ENCODE measurements at regions of chr2 and their contacts with region 1.

Region 1: GRCh38 chr2:209208211-209208610 is 215.6 kb upstream of the MAP2 start:
- DNase-seq: peak; percentile 32
- ATAC-seq: peak; percentile 82
- H3K4me3 ChIP-seq: peak overlapping the region; percentile 25 to 54 (median 53); a peak in 5 of 6 replicates
- H3K27ac ChIP-seq: no peak overlapping the region
- H3K4me1 ChIP-seq: no peaks in the 10 kb centered on the region
- H3K27me3 ChIP-seq: no peaks in the 10 kb centered on the region
- CTCF ChIP-seq: peak; percentile 78
- EP300 ChIP-seq: no peak
- POLR2A ChIP-seq: no peak
- RAD21 ChIP-seq: peak; percentile 72

Region 2: GRCh38 chr2:208466151-208466919 is 741.9 kb before region 1 on chr2:
- CTCF ChIA-PET with region 1: interaction called, 19 read pairs
- POLR2A ChIA-PET with region 1: no interaction called
- in situ Hi-C with region 1: loop called (anchors 10 kb)
- intact Hi-C with region 1: loop called (anchors 1 kb)
- DNase-seq: peak; percentile 61
- ATAC-seq: peak; percentile 95
- H3K4me3 ChIP-seq: no peak overlapping the region
- H3K27ac ChIP-seq: no peak overlapping the region
- H3K4me1 ChIP-seq: no peaks in the 10 kb centered on the region
- H3K27me3 ChIP-seq: no peaks in the 10 kb centered on the region
- CTCF ChIP-seq: peak; percentile 86
- EP300 ChIP-seq: no peak
- POLR2A ChIP-seq: no peak
- RAD21 ChIP-seq: peak; percentile 76

Region 3: GRCh38 chr2:208657468-208657867 is 550.7 kb before region 1 on chr2:
- CTCF ChIA-PET with region 1: no interaction called
- POLR2A ChIA-PET with region 1: no interaction called
- in situ Hi-C with region 1: no loop called
- intact Hi-C with region 1: loop called (anchors 1 kb)
- DNase-seq: no peak
- ATAC-seq: peak; percentile 87
- H3K4me3 ChIP-seq: no peak overlapping the region
- H3K27ac ChIP-seq: no peak overlapping the region
- H3K4me1 ChIP-seq: no peaks in the 10 kb centered on the region
- H3K27me3 ChIP-seq: no peaks in the 10 kb centered on the region
- CTCF ChIP-seq: peak; percentile 21; the same call in 1 of the 2 replicates
- EP300 ChIP-seq: no peak
- POLR2A ChIP-seq: no peak
- RAD21 ChIP-seq: no peak

Region 4: DNA sequence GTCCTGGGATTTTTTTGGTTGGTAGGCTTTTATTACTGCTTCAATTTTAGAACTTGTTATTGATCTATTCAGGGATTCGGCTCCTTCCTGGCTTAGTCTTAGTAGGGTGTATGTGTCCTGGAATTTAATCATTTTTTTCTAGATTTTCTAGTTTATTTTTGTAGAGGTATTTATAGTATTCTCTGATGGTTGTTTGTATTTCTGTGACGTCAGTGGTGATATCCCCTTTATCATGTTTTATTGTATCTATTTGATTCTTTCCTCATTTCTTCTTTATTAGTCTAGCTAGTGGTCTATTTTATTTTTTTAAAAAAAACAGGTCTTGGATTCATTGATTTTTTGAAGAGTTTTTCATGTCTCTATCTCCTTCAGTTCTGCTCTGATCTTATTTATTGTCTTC is 22.3 kb after region 1 on chr2:
- CTCF ChIA-PET with region 1: no interaction called
- POLR2A ChIA-PET with region 1: no interaction called
- in situ Hi-C with region 1: no loop called
- intact Hi-C with region 1: no loop called
- DNase-seq: no peak
- ATAC-seq: no peak
- H3K4me3 ChIP-seq: no peak overlapping the region
- H3K27ac ChIP-seq: no peak overlapping the region
- H3K4me1 ChIP-seq: no peaks in the 10 kb centered on the region
- H3K27me3 ChIP-seq: no peaks in the 10 kb centered on the region
- CTCF ChIP-seq: no peak
- EP300 ChIP-seq: no peak
- POLR2A ChIP-seq: no peak
- RAD21 ChIP-seq: no peak